ENCODE measurements at regions of chr12 and their contacts with region 1.

Region 1: DNA sequence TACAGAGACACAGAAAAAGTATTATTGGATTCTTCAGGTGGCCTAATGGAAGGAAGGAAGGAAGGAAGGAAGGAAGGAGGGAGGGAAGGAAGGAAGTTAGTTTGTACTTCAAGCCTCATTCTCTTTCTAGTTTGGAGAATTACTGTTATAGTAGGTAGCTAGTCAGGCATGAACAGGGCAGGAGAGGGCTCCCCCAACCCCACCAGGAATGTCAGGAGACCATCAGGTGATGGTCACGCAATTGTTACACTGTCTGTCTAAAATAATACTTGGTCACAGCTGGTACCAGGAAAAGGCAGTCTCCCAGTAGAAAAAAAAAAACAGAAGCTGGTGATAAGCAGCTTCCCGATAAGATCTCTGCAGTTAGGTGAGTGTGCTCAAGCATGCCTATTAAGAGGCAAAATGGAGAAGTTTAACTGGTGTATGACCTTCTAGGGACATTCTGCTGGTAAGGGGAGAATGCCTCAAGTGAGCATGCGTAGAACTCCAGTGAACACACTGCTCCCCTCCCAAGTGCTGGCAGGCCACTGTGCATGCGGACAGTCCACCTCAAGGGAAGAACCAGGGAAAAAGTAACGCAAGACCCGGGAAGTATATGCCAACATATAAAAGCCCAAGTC is 358.4 kb upstream of the SOX5 start:
- DNase-seq: peak; percentile 93
- H3K4me3 ChIP-seq: no peak overlapping the region
- H3K27ac ChIP-seq: peak overlapping the region; percentile 99
- H3K4me1 ChIP-seq: peaks cover 54% of the 10 kb centered on the region
- H3K27me3 ChIP-seq: no peaks in the 10 kb centered on the region
- CTCF ChIP-seq: no peak

Region 2: GRCh38 chr12:23204933-23205778 is 1102.7 kb before region 1 on chr12:
- CTCF ChIA-PET with region 1: no interaction called
- POLR2A ChIA-PET with region 1: no interaction called
- intact Hi-C with region 1: loop called (anchors 10 kb)
- DNase-seq: peak; percentile 78
- H3K4me3 ChIP-seq: no peak overlapping the region
- H3K27ac ChIP-seq: no peak overlapping the region
- H3K4me1 ChIP-seq: peaks cover 3% of the 10 kb centered on the region
- H3K27me3 ChIP-seq: no peaks in the 10 kb centered on the region
- CTCF ChIP-seq: peak; percentile 89

Region 3: DNA sequence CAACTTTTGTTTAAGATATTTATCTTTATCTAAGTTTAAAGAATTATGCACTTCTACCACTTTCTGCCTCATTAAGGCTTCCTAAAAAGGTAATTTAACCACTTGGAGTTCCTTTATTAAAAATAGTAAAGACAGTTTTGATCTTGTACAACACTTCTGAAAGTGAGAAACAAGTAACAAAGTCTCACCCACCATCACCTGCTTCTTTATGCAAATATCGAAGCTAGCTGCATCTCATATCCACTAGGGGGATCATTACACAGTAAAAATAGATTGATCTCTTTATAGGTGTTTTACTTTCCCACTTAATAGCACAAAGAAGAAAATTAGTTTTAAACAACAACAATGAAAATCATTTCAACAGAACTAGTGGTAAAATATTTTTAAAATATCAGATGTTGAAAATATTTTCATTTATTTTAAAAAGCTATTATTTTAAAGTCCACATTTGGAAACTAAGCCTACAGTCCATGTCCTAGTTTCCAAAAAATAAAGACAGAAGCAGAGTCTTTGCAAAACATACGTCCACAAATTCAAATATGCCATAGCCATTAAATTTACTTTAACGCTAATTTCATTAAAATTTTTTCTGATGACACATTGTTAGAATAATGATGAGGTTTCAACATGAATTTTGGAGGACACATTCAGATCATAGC is 198.3 kb before region 1 on chr12:
- CTCF ChIA-PET with region 1: no interaction called
- POLR2A ChIA-PET with region 1: interaction called, 9 read pairs
- intact Hi-C with region 1: loop called (anchors 1 kb)
- DNase-seq: peak; percentile 64
- H3K4me3 ChIP-seq: no peak overlapping the region
- H3K27ac ChIP-seq: peak overlapping the region; percentile 54
- H3K4me1 ChIP-seq: peaks cover 38% of the 10 kb centered on the region
- H3K27me3 ChIP-seq: no peaks in the 10 kb centered on the region
- CTCF ChIP-seq: peak; percentile 81

Region 4: GRCh38 chr12:24596768-24597388 is 289.1 kb after region 1 on chr12:
- CTCF ChIA-PET with region 1: no interaction called
- POLR2A ChIA-PET with region 1: no interaction called
- intact Hi-C with region 1: loop called (anchors 1 kb)
- DNase-seq: peak; percentile 77
- H3K4me3 ChIP-seq: no peak overlapping the region
- H3K27ac ChIP-seq: no peak overlapping the region
- H3K4me1 ChIP-seq: peaks cover 44% of the 10 kb centered on the region
- H3K27me3 ChIP-seq: no peaks in the 10 kb centered on the region
- CTCF ChIP-seq: peak; percentile 76

Region 5: GRCh38 chr12:24778486-24779304 is 470.9 kb after region 1 on chr12:
- CTCF ChIA-PET with region 1: interaction called, 5 read pairs
- POLR2A ChIA-PET with region 1: interaction called, 6 read pairs
- intact Hi-C with region 1: loop called (anchors 2 kb)
- DNase-seq: peak; percentile 81
- H3K4me3 ChIP-seq: no peak overlapping the region
- H3K27ac ChIP-seq: peak overlapping the region; percentile 52
- H3K4me1 ChIP-seq: peaks cover 55% of the 10 kb centered on the region
- H3K27me3 ChIP-seq: no peaks in the 10 kb centered on the region
- CTCF ChIP-seq: peak; percentile 60

Region 6: GRCh38 chr12:24838531-24838950 is 530.7 kb after region 1 on chr12:
- CTCF ChIA-PET with region 1: no interaction called
- POLR2A ChIA-PET with region 1: no interaction called
- intact Hi-C with region 1: loop called (anchors 5 kb)
- DNase-seq: no peak
- H3K4me3 ChIP-seq: no peak overlapping the region
- H3K27ac ChIP-seq: no peak overlapping the region
- H3K4me1 ChIP-seq: peaks cover 6% of the 10 kb centered on the region
- H3K27me3 ChIP-seq: no peaks in the 10 kb centered on the region
- CTCF ChIP-seq: no peak

Measured in A673 (cell line).